ENCODE measurements at regions of chr6 and their contacts with region 1.

Region 1: GRCh38 chr6:167119670-167120381 is 3.1 kb upstream of the CCR6 start:
- DNase-seq: peak; percentile 19
- ATAC-seq: no peak
- H3K4me3 Mint-ChIP-seq: peak overlapping the region; percentile 91
- H3K27ac Mint-ChIP-seq: peak overlapping the region; percentile 89
- H3K4me1 Mint-ChIP-seq: peaks cover 95% of the 10 kb centered on the region
- H3K27me3 Mint-ChIP-seq: no peaks in the 10 kb centered on the region
- CTCF ChIP-seq: no peak

Region 2: DNA sequence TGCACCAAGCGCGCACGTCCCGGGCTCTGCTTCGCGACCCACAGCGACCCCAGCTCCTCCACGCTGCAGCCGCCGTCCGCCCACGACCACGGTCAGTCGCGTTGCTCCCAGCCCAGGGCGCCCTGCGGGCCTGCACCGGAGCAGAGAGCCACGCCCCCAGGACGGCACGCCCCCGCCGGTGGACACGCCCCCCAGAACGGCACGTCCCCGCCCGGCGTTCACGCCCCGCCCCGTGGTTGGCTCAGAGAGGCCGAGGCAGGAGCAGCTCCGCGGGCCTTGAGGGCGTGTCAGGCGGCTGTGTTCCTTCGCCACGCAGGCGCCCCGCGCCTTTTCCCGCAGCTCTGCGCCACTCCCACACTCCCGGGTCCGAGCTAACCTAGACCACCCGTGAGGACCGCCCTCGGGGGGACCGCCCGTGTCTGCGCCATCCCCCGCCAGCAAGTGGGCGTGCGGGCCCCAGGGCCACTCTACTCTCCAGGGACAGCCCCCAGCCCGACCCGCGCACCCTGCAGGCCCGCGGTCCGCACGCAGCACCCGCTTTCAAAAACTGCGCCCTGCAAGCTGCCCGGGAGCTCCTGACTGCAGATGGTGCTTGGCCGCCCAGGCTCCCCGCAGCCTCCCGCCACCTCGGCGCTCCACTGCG is 163.3 kb before region 1 on chr6 and contains the start of gene RNASET2:
- CTCF ChIA-PET with region 1: interaction called, 4 read pairs
- POLR2A ChIA-PET with region 1: interaction called, 14 read pairs
- intact Hi-C with region 1: no loop called
- DNase-seq: peak; percentile 100
- ATAC-seq: peak; percentile 82
- H3K4me3 Mint-ChIP-seq: peak within 1 kb of the TSS; percentile 91
- H3K27ac Mint-ChIP-seq: peak within 1 kb of the TSS; percentile 100
- H3K4me1 Mint-ChIP-seq: peaks cover 76% of the 10 kb centered on the region
- H3K27me3 Mint-ChIP-seq: no peaks in the 10 kb centered on the region
- CTCF ChIP-seq: no peak
- total RNA-seq, gene RNASET2: 118 and 135 TPM in 2 replicates

Region 3: DNA sequence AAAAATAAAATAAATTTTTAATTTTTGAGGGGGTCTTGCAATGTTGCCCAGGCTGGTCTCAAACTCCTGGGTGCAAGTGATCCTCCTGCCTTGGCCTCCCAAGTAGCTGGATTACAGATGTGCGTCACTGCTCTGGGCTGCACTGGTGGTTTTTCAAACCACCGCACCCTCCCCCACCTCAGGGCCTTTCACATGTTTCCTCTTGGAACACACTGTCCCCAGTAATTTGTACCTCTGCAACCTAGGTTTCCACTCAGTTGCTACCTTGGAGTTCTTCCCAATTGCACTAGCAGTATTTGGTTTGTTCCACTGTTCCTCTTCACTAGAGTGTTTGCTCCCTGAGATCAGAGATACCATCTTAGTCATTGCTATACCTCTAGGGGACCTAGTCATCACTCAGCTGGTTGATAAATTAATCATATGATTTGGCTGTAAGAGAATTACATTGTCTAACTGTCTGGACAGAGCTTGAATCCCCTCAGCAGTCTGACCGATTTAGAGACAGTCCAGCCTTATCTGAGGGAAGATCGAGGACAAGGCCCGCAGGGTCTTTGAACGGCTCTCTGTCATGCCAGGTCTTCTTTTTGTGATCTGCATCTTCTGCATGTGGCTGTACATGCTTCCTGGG is 88.6 kb before region 1 on chr6:
- CTCF ChIA-PET with region 1: no interaction called
- POLR2A ChIA-PET with region 1: no interaction called
- intact Hi-C with region 1: no loop called
- DNase-seq: no peak
- ATAC-seq: no peak
- H3K4me3 Mint-ChIP-seq: no peak overlapping the region
- H3K27ac Mint-ChIP-seq: peak overlapping the region; percentile 4
- H3K4me1 Mint-ChIP-seq: peaks cover 9% of the 10 kb centered on the region
- H3K27me3 Mint-ChIP-seq: no peaks in the 10 kb centered on the region
- CTCF ChIP-seq: no peak

Region 4: GRCh38 chr6:167047554-167047953 is 72.3 kb before region 1 on chr6:
- CTCF ChIA-PET with region 1: interaction called, 8 read pairs
- POLR2A ChIA-PET with region 1: interaction called, 16 read pairs
- intact Hi-C with region 1: loop called (anchors 2 kb)
- DNase-seq: peak; percentile 36
- ATAC-seq: peak; percentile 85
- H3K4me3 Mint-ChIP-seq: peak overlapping the region; percentile 76
- H3K27ac Mint-ChIP-seq: peak overlapping the region; percentile 96
- H3K4me1 Mint-ChIP-seq: peaks cover 68% of the 10 kb centered on the region
- H3K27me3 Mint-ChIP-seq: no peaks in the 10 kb centered on the region
- CTCF ChIP-seq: no peak

Region 5: GRCh38 chr6:167079853-167080297 is 40.0 kb before region 1 on chr6:
- CTCF ChIA-PET with region 1: no interaction called
- POLR2A ChIA-PET with region 1: interaction called, 22 read pairs
- intact Hi-C with region 1: loop called (anchors 1 kb)
- DNase-seq: peak; percentile 65
- ATAC-seq: peak; percentile 99
- H3K4me3 Mint-ChIP-seq: peak overlapping the region; percentile 54
- H3K27ac Mint-ChIP-seq: peak overlapping the region; percentile 91
- H3K4me1 Mint-ChIP-seq: peaks cover 52% of the 10 kb centered on the region
- H3K27me3 Mint-ChIP-seq: no peaks in the 10 kb centered on the region
- CTCF ChIP-seq: peak; percentile 51

Region 6: GRCh38 chr6:167103041-167103891 is 16.6 kb before region 1 on chr6:
- CTCF ChIA-PET with region 1: interaction called, 12 read pairs
- POLR2A ChIA-PET with region 1: interaction called, 84 read pairs
- intact Hi-C with region 1: no loop called
- DNase-seq: no peak
- ATAC-seq: peak; percentile 67
- H3K4me3 Mint-ChIP-seq: peak overlapping the region; percentile 58
- H3K27ac Mint-ChIP-seq: peak overlapping the region; percentile 98
- H3K4me1 Mint-ChIP-seq: peaks cover 96% of the 10 kb centered on the region
- H3K27me3 Mint-ChIP-seq: no peaks in the 10 kb centered on the region
- CTCF ChIP-seq: no peak

Region 7: DNA sequence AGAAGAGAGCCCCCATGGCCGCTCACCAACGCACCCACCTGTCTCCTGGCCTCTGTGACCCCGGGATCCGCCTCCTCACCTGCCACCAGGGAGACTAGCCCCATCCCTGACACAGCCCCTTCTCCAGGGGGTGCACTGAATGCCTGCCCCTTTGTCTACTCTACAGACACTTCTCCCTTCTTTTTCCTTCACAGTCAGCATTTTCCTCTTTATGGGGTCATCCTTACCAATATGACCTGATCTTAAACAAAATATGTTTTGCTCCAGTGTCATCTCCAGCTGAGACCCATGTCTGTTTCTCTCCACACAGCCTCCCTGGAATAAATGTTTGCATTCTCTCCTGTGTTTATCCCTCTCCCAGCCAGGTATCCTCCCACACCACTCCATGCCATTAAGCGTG is 11.5 kb before region 1 on chr6:
- CTCF ChIA-PET with region 1: interaction called, 14 read pairs
- POLR2A ChIA-PET with region 1: interaction called, 688 read pairs
- intact Hi-C with region 1: no loop called
- DNase-seq: no peak
- ATAC-seq: no peak
- H3K4me3 Mint-ChIP-seq: peak overlapping the region; percentile 24
- H3K27ac Mint-ChIP-seq: peak overlapping the region; percentile 76
- H3K4me1 Mint-ChIP-seq: peaks cover 96% of the 10 kb centered on the region
- H3K27me3 Mint-ChIP-seq: no peaks in the 10 kb centered on the region
- CTCF ChIP-seq: no peak

Region 8: GRCh38 chr6:167130008-167130677 is 10.3 kb after region 1 on chr6:
- CTCF ChIA-PET with region 1: interaction called, 8 read pairs
- POLR2A ChIA-PET with region 1: interaction called, 688 read pairs
- intact Hi-C with region 1: loop called (anchors 1 kb)
- DNase-seq: no peak
- ATAC-seq: peak; percentile 18
- H3K4me3 Mint-ChIP-seq: peak overlapping the region; percentile 55
- H3K27ac Mint-ChIP-seq: peak overlapping the region; percentile 95
- H3K4me1 Mint-ChIP-seq: peaks cover 91% of the 10 kb centered on the region
- H3K27me3 Mint-ChIP-seq: no peaks in the 10 kb centered on the region
- CTCF ChIP-seq: no peak

Region 9: GRCh38 chr6:168574075-168574698 is 1454.4 kb after region 1 on chr6:
- CTCF ChIA-PET with region 1: no interaction called
- POLR2A ChIA-PET with region 1: no interaction called
- intact Hi-C with region 1: no loop called
- DNase-seq: no peak
- ATAC-seq: no peak
- H3K4me3 Mint-ChIP-seq: no peak overlapping the region
- H3K27ac Mint-ChIP-seq: no peak overlapping the region
- H3K4me1 Mint-ChIP-seq: no peaks in the 10 kb centered on the region
- H3K27me3 Mint-ChIP-seq: no peaks in the 10 kb centered on the region
- CTCF ChIP-seq: no peak